Sigmoid colon (tissue), 7 donors: ENCODE measurements at regions of chr1 and their contacts with region 1.

Region 1: DNA sequence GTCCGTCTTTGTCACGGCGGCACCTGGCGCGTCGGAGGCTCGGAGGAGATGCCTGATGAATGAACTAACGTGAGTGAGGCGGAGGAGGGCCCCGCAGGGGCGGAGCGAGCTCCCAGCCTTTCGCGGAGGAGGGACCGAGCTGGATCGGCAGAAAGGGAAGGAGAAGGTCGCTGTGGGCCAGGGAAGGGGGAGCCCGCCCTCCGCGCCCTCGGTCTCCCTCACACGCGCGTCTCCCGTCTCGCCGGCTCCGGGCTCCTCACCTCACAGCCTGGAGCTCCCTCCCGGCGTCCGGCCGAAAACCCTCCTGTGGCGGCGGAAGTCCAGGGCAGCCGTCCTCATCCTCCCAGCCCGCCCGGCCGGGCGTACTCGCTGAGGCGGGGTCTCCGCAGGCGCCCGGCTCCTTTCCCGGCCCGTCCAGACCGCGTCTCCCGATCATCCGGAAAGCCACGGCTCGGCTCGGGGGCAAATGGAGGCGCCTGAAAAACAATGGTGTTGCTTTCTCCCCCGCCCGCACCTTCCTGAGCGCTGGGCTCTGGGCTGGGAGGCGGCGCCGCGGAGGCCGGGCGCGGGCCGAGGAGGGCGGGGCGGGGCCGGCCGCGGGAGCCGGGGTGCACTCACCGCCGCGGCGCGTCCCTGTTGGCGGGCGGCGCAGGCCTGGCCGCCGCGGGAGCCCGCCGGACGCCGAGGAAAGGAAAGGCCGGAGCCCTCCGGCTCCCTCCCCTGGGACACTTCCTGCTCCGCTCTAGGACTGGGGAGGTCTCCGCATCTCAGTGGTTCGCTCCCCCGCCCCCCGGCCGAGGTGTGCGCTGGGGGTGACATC is at the start of gene ZNF496:
- DNase-seq: peak; percentile 93
- H3K4me3 ChIP-seq: peak within 1 kb of the TSS; percentile 93 to 99 (median 98)
- H3K27ac ChIP-seq: peak within 1 kb of the TSS; percentile 95 to 97 (median 96)
- H3K4me1 ChIP-seq: peaks cover 0 to 47% (median 30%) of the 10 kb centered on the region in 4 donors
- H3K27me3 ChIP-seq: no peaks in the 10 kb centered on the region
- CTCF ChIP-seq: no peak
- EP300 ChIP-seq: no peak
- POLR2A ChIP-seq: peak in 1 of 2 donors; percentile 54
- total RNA-seq, gene ZNF496: 31.6 to 70.7 (median 37.3) TPM

Region 2: GRCh38 chr1:246931549-246932365 is 399.6 kb before region 1 on chr1 and contains the start of gene AHCTF1:
- intact Hi-C with region 1: loop called (anchors 5 kb)
- DNase-seq: peak; percentile 99
- H3K4me3 ChIP-seq: peak within 1 kb of the TSS; percentile 96 to 99 (median 97)
- H3K27ac ChIP-seq: peak within 1 kb of the TSS; percentile 99 to 100 (median 99)
- H3K4me1 ChIP-seq: peaks cover 4 to 32% (median 28%) of the 10 kb centered on the region in 4 donors
- H3K27me3 ChIP-seq: no peaks in the 10 kb centered on the region
- CTCF ChIP-seq: no peak
- EP300 ChIP-seq: no peak
- POLR2A ChIP-seq: peak; percentile 93 to 97
- total RNA-seq, gene AHCTF1: 35.7 to 61.8 (median 42.5) TPM

Region 3: GRCh38 chr1:247070645-247071044 is 260.7 kb before region 1 on chr1:
- intact Hi-C with region 1: no loop called
- DNase-seq: no peak
- H3K4me3 ChIP-seq: no peak overlapping the region
- H3K27ac ChIP-seq: no peak overlapping the region
- H3K4me1 ChIP-seq: no peaks in the 10 kb centered on the region
- H3K27me3 ChIP-seq: no peaks in the 10 kb centered on the region
- CTCF ChIP-seq: no peak
- EP300 ChIP-seq: no peak
- POLR2A ChIP-seq: no peak

Region 4: GRCh38 chr1:247103859-247104591 is 227.4 kb before region 1 on chr1 and contains the start of gene ZNF669:
- intact Hi-C with region 1: loop called (anchors 5 kb)
- DNase-seq: peak; percentile 99
- H3K4me3 ChIP-seq: peak within 1 kb of the TSS; percentile 76 to 91 (median 84)
- H3K27ac ChIP-seq: peak within 1 kb of the TSS; percentile 87 to 93 (median 88)
- H3K4me1 ChIP-seq: peaks cover 0 to 22% (median 18%) of the 10 kb centered on the region in 4 donors
- H3K27me3 ChIP-seq: no peaks in the 10 kb centered on the region
- CTCF ChIP-seq: no peak
- EP300 ChIP-seq: no peak
- POLR2A ChIP-seq: peak; percentile 75 to 78
- total RNA-seq, gene ZNF669: 4.2 to 5.8 (median 5.2) TPM

Region 5: GRCh38 chr1:247210376-247211117 is 120.8 kb before region 1 on chr1:
- intact Hi-C with region 1: loop called (anchors 5 kb)
- DNase-seq: peak; percentile 98
- H3K4me3 ChIP-seq: peak overlapping the region; percentile 82 to 93 (median 86)
- H3K27ac ChIP-seq: peak overlapping the region; percentile 85 to 87 (median 86)
- H3K4me1 ChIP-seq: peaks cover 0 to 16% (median 11%) of the 10 kb centered on the region in 4 donors
- H3K27me3 ChIP-seq: no peaks in the 10 kb centered on the region
- CTCF ChIP-seq: no peak
- EP300 ChIP-seq: no peak
- POLR2A ChIP-seq: peak; percentile 56 to 79

Region 6: GRCh38 chr1:247222840-247223239 is 108.5 kb before region 1 on chr1:
- intact Hi-C with region 1: no loop called
- DNase-seq: no peak
- H3K4me3 ChIP-seq: no peak overlapping the region
- H3K27ac ChIP-seq: no peak overlapping the region
- H3K4me1 ChIP-seq: no peaks in the 10 kb centered on the region
- H3K27me3 ChIP-seq: no peaks in the 10 kb centered on the region
- CTCF ChIP-seq: no peak
- EP300 ChIP-seq: no peak
- POLR2A ChIP-seq: no peak

Region 7: GRCh38 chr1:247373721-247374141 is 42.3 kb after region 1 on chr1:
- intact Hi-C with region 1: loop called (anchors 5 kb)
- DNase-seq: peak; percentile 73
- H3K4me3 ChIP-seq: peak overlapping the region in 2 of 4 donors; percentile 41 to 48
- H3K27ac ChIP-seq: no peak overlapping the region
- H3K4me1 ChIP-seq: peaks cover 0 to 26% (median 17%) of the 10 kb centered on the region in 4 donors
- H3K27me3 ChIP-seq: no peaks in the 10 kb centered on the region
- CTCF ChIP-seq: peak in 2 of 4 experiments; percentile 13 to 37
- EP300 ChIP-seq: no peak
- POLR2A ChIP-seq: no peak